HepG2 (cell line): ENCODE measurements at regions of chr2 and their contacts with region 1.

Region 1: DNA sequence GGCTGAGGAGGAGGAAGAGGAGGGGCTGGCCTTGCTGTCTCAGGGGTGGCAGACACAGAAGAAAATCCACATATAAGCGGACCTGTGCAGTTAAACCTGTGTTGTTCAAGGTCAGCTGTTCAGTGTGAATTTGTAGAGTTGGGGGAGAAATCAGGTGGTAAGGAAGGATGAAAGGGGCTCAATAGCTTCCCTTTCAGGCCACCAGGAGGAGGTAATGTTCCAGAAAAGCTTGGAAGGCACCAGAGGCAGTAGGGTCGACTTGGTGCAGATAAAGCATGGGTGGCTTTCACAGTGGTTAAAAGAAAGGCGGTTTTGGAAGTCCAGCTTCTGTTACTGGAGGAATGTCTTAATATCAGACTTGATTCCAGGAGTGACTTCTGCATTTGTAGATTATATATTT is 167.4 kb downstream of the THSD7B start:
- DNase-seq: peak; percentile 30
- ATAC-seq: peak; percentile 98
- H3K4me3 ChIP-seq: no peak overlapping the region
- H3K27ac ChIP-seq: no peak overlapping the region
- H3K4me1 ChIP-seq: no peaks in the 10 kb centered on the region
- H3K27me3 ChIP-seq: no peaks in the 10 kb centered on the region
- CTCF ChIP-seq: peak; percentile 80
- EP300 ChIP-seq: no peak
- POLR2A ChIP-seq: no peak
- RAD21 ChIP-seq: peak; percentile 59

Region 2: GRCh38 chr2:136920652-136921333 is 11.9 kb before region 1 on chr2:
- CTCF ChIA-PET with region 1: no interaction called
- POLR2A ChIA-PET with region 1: no interaction called
- in situ Hi-C with region 1: no loop called
- intact Hi-C with region 1: loop called (anchors 1 kb)
- DNase-seq: peak; percentile 7
- ATAC-seq: peak; percentile 87
- H3K4me3 ChIP-seq: no peak overlapping the region
- H3K27ac ChIP-seq: no peak overlapping the region
- H3K4me1 ChIP-seq: no peaks in the 10 kb centered on the region
- H3K27me3 ChIP-seq: no peaks in the 10 kb centered on the region
- CTCF ChIP-seq: 0 out of 2 replicates have a peak, but pooled peaks have one; percentile 8
- EP300 ChIP-seq: no peak
- POLR2A ChIP-seq: no peak
- RAD21 ChIP-seq: no peak

Region 3: DNA sequence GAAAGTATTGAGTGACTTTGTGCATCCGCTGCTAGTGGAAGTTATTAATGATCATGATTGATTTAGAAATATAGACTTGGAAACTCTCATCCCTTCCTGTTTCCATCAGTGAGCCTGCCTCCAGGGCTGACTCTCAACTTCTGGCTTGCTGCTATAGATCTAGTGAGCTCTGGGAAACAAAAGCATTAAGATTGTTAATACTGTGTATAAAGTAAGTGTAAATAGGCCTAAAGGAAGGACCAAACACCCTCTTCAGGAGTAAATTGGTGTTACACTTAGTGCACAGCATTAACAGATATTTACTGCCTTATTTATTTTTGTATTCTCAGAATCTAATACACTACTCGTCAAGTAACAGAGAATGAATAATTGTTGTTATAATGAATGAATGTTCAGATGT is 118.2 kb after region 1 on chr2:
- CTCF ChIA-PET with region 1: no interaction called
- POLR2A ChIA-PET with region 1: no interaction called
- in situ Hi-C with region 1: no loop called
- intact Hi-C with region 1: loop called (anchors 1 kb)
- DNase-seq: no peak
- ATAC-seq: peak; percentile 71
- H3K4me3 ChIP-seq: no peak overlapping the region
- H3K27ac ChIP-seq: no peak overlapping the region
- H3K4me1 ChIP-seq: peaks cover 22% of the 10 kb centered on the region
- H3K27me3 ChIP-seq: no peaks in the 10 kb centered on the region
- CTCF ChIP-seq: peak; percentile 23; the same call in 1 of the 2 replicates
- EP300 ChIP-seq: no peak
- POLR2A ChIP-seq: no peak
- RAD21 ChIP-seq: no peak

Region 4: DNA sequence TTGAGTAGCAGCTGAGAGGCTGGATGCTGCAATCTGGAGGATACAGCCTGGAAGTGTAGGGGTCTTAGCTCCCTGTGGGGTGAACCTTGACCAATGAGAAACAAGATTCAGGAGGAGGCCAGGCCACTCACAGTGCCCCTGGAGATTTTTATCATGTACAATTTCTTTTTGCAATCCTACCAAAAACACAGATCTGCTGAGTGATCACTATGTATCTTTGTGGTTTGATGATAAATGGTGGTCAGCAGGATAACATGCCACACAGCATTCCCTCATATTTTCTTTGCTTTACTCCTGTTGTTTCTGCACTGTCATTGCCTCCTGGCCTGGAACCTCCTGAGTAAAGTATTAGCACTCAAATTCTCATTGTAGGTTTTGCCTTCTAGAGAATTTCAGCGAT is 190.5 kb after region 1 on chr2:
- CTCF ChIA-PET with region 1: no interaction called
- POLR2A ChIA-PET with region 1: no interaction called
- in situ Hi-C with region 1: no loop called
- intact Hi-C with region 1: no loop called
- DNase-seq: no peak
- ATAC-seq: no peak
- H3K4me3 ChIP-seq: no peak overlapping the region
- H3K27ac ChIP-seq: no peak overlapping the region
- H3K4me1 ChIP-seq: no peaks in the 10 kb centered on the region
- H3K27me3 ChIP-seq: no peaks in the 10 kb centered on the region
- CTCF ChIP-seq: no peak
- EP300 ChIP-seq: no peak
- POLR2A ChIP-seq: no peak
- RAD21 ChIP-seq: no peak

Region 5: DNA sequence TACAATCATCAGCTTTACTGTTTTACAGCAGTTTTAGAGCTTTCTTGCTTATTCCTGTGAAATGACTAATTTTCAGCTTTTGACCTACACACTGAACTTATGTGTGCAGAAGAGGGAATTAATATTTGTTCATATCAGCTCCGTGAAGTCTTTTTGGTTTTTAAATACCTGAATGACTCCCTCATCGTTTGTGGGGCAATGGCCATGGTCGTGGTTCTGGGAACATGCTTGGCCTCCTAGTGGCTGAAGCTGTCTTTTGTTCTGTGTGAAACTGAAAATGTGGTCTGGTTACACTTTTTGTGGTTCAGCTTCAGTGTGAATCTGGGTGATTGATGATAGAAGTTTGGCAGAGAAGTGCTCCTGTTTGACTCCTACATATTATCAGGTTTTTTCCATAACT is 240.8 kb after region 1 on chr2:
- CTCF ChIA-PET with region 1: no interaction called
- POLR2A ChIA-PET with region 1: no interaction called
- in situ Hi-C with region 1: no loop called
- intact Hi-C with region 1: loop called (anchors 1 kb)
- DNase-seq: peak; percentile 14
- ATAC-seq: peak; percentile 86
- H3K4me3 ChIP-seq: no peak overlapping the region
- H3K27ac ChIP-seq: no peak overlapping the region
- H3K4me1 ChIP-seq: 0 out of 2 replicates have a peak, but pooled peaks cover 8% of the 10 kb centered on the region
- H3K27me3 ChIP-seq: no peaks in the 10 kb centered on the region
- CTCF ChIP-seq: peak; percentile 46
- EP300 ChIP-seq: no peak
- POLR2A ChIP-seq: no peak
- RAD21 ChIP-seq: no peak

Region 6: DNA sequence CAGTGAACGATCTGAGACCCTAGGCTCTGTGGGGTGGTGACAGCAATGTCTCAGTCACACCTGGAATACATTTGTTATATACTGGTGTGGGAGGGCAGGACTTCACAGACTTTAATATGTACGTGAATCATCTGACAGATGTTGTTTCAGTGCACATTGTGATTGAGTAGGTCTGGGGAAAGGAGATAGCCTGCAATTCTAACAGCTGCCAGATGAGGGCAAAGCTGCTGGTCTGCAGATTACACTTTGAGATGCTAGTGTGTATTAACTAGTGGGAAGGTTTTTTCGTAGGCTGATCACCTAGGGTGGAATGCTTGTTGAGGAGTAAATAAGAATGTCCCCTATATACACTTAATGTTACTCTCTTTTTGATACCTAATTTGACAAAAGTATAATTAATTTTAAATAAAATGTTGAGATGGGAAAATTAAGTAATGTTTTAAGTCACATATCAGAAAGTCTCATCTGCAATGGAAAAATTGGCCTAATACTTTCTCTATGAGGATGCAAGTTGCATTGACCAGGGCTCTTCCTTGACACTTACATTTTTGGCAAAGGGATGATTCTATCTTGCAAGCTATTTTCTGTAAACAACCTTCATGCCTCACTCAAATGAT is 534.7 kb after region 1 on chr2:
- CTCF ChIA-PET with region 1: no interaction called
- POLR2A ChIA-PET with region 1: no interaction called
- in situ Hi-C with region 1: no loop called
- intact Hi-C with region 1: loop called (anchors 1 kb)
- DNase-seq: peak; percentile 23
- ATAC-seq: peak; percentile 98
- H3K4me3 ChIP-seq: no peak overlapping the region
- H3K27ac ChIP-seq: no peak overlapping the region
- H3K4me1 ChIP-seq: no peaks in the 10 kb centered on the region
- H3K27me3 ChIP-seq: no peaks in the 10 kb centered on the region
- CTCF ChIP-seq: peak; percentile 75
- EP300 ChIP-seq: no peak
- POLR2A ChIP-seq: no peak
- RAD21 ChIP-seq: peak; percentile 37; the same call in 1 of the 2 replicates

Region 7: GRCh38 chr2:137659612-137660011 is 726.9 kb after region 1 on chr2:
- CTCF ChIA-PET with region 1: no interaction called
- POLR2A ChIA-PET with region 1: no interaction called
- in situ Hi-C with region 1: no loop called
- intact Hi-C with region 1: loop called (anchors 2 kb)
- DNase-seq: peak; percentile 12
- ATAC-seq: peak; percentile 56
- H3K4me3 ChIP-seq: no peak overlapping the region
- H3K27ac ChIP-seq: no peak overlapping the region
- H3K4me1 ChIP-seq: no peaks in the 10 kb centered on the region
- H3K27me3 ChIP-seq: no peaks in the 10 kb centered on the region
- CTCF ChIP-seq: peak; percentile 44
- EP300 ChIP-seq: no peak
- POLR2A ChIP-seq: no peak
- RAD21 ChIP-seq: no peak

Region 8: GRCh38 chr2:137838255-137839092 is 905.8 kb after region 1 on chr2:
- CTCF ChIA-PET with region 1: interaction called, 24 read pairs
- POLR2A ChIA-PET with region 1: no interaction called
- in situ Hi-C with region 1: loop called (anchors 5 kb)
- intact Hi-C with region 1: loop called (anchors 1 kb)
- DNase-seq: peak; percentile 58
- ATAC-seq: peak; percentile 86
- H3K4me3 ChIP-seq: no peak overlapping the region
- H3K27ac ChIP-seq: no peak overlapping the region
- H3K4me1 ChIP-seq: no peaks in the 10 kb centered on the region
- H3K27me3 ChIP-seq: no peaks in the 10 kb centered on the region; a peak in 1 of 5 replicates
- CTCF ChIP-seq: peak; percentile 86
- EP300 ChIP-seq: no peak
- POLR2A ChIP-seq: no peak
- RAD21 ChIP-seq: peak; percentile 86